ENCODE measurements at regions of chr2 and their contacts with region 1.

Region 1: GRCh38 chr2:8491296-8492027 is 190.4 kb upstream of the ID2 start:
- DNase-seq: no peak
- ATAC-seq: peak; percentile 61

Region 2: GRCh38 chr2:8132351-8132831 is 359.1 kb before region 1 on chr2:
- intact Hi-C with region 1: loop called (anchors 10 kb)
- DNase-seq: no peak
- ATAC-seq: peak; percentile 16